ENCODE measurements at regions of chr7 and their contacts with region 1.

Region 1: DNA sequence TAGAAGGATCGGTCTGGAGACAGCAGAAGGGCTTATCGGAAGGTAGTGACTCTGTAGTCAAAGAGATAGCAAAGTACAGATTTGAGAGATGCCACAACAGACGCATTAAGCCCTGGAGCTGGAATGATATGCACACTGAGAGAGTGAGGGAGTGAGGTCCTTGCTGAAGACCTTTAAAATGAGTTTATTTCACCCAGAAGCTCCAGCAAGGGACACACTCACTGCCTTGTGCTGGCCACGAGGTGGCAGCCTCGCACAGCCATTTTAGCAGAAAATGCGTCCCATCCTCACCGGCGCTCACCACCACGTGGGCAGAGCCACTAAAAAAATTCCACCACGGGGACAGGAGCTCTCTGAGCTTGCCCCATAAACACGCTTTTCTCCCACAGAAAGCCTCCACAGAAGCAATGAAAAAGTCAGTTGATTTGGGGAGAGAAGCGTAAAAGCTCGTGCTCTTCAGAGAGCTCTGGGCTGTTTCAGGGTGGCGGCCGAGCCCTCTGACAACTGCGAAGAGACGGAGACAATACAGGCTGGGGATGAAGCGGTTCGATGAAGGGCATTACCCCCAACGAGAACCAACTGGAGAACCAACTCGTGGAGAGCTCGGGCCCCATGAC is 163.0 kb upstream of the KLF14 start:
- DNase-seq: peak in 1 of 2 donors; percentile 78
- H3K4me3 ChIP-seq: no peak overlapping the region
- H3K27ac ChIP-seq: peak overlapping the region; percentile 91 to 93
- H3K4me1 ChIP-seq: peaks cover 6 to 45% of the 10 kb centered on the region in 2 donors
- H3K27me3 ChIP-seq: no peaks in the 10 kb centered on the region
- CTCF ChIP-seq: peak; percentile 86

Region 2: DNA sequence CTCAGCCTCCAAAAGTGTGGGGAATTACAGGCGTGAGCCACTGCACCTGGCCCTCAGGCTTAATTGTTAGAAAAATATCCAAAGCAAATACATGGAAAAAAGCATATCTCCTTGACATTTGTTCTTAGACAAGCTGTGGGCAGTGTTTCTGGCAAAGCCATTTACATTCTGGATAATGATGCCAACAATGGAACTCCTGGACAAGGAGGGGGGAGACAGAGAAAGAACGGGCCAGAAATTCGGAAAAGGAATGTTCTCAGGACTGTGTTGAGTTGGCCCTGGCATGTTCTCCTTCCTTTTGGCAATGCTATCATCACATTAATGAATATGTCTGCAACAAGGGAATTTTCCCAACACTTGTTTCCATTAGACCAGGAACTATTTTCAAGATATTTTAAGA is 1033.0 kb before region 1 on chr7:
- intact Hi-C with region 1: loop called (anchors 10 kb)
- DNase-seq: peak in 1 of 2 donors; percentile 89
- H3K4me3 ChIP-seq: no peak overlapping the region
- H3K27ac ChIP-seq: peak overlapping the region; percentile 88 to 96
- H3K4me1 ChIP-seq: peaks cover 13 to 79% of the 10 kb centered on the region in 2 donors
- H3K27me3 ChIP-seq: no peaks in the 10 kb centered on the region
- CTCF ChIP-seq: no peak

Region 3: DNA sequence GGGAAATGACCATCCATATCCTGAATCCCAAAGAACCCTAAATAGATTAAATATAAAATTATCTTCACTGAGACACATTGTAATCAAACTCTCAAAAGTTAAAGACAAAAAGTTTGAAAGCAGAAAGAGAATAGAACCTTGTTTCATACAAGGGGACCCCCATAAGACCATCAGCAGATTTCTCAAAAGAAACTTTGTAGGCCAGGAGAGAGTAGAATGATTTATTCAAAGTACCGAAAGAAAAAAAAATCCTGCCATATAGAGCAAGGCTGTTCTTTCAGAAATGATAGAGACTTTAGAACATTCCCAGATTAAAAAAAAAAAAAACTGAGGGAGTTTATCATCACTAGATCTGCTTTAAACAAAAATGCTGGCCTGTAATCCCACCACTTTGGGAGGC is 128.2 kb before region 1 on chr7:
- intact Hi-C with region 1: no loop called
- DNase-seq: no peak
- H3K4me3 ChIP-seq: no peak overlapping the region
- H3K27ac ChIP-seq: no peak overlapping the region
- H3K4me1 ChIP-seq: no peaks in the 10 kb centered on the region
- H3K27me3 ChIP-seq: no peaks in the 10 kb centered on the region
- CTCF ChIP-seq: no peak

Region 4: GRCh38 chr7:130814778-130815335 is 82.1 kb before region 1 on chr7:
- intact Hi-C with region 1: no loop called
- DNase-seq: no peak
- H3K4me3 ChIP-seq: no peak overlapping the region
- H3K27ac ChIP-seq: no peak overlapping the region
- H3K4me1 ChIP-seq: no peaks in the 10 kb centered on the region
- H3K27me3 ChIP-seq: no peaks in the 10 kb centered on the region
- CTCF ChIP-seq: peak in 1 of 3 experiments; percentile 34

Region 5: DNA sequence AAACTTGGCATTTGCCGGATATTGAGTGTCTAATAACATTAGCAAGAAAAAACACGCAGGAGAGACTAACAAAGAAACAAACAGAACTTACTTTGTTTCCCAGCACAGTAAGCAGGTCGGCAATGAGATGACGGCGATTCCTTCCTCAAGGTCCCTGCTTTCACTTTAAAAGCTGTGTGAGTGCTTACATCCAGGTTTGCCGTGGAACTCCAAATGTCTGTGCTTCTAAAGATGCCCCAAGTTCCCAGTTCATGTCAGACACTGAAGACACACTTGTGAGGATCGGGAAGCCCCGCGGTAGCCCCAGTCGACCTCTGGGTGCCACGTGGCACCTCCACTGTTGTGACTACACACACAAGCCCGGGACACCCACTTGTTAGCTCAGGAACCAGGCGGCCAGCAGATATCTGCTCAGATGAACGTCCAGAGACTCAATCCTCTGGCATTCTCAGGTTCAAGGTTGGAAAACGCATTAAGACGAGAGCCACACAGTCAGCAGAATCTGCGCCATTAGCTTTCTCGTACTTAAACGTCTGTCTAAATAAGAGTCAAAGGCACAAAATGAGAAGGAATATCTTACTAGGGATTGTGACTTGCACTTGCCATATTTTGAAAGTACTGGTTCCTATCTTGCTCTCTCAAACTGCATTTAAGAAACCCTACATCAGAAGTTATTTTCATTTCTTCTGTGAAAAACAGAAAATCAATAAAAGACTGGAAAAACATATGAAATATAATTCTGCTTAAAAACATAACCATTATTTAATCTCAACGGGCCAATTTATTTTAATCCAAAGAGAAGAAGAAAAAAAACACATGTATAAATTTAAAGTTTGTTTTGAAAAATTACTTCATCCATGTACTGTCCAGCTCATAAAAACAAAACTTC is 44.6 kb after region 1 on chr7:
- intact Hi-C with region 1: loop called (anchors 5 kb)
- DNase-seq: peak in 1 of 2 donors; percentile 75
- H3K4me3 ChIP-seq: peak overlapping the region; percentile 44 to 60
- H3K27ac ChIP-seq: peak overlapping the region; percentile 69 to 70
- H3K4me1 ChIP-seq: peaks cover 0 to 34% of the 10 kb centered on the region in 2 donors
- H3K27me3 ChIP-seq: no peaks in the 10 kb centered on the region
- CTCF ChIP-seq: no peak

Region 6: GRCh38 chr7:131040467-131040932 is 143.5 kb after region 1 on chr7:
- intact Hi-C with region 1: loop called (anchors 2 kb)
- DNase-seq: no peak
- H3K4me3 ChIP-seq: no peak overlapping the region
- H3K27ac ChIP-seq: peak overlapping the region; percentile 31 to 50
- H3K4me1 ChIP-seq: peaks cover 4 to 20% of the 10 kb centered on the region in 2 donors
- H3K27me3 ChIP-seq: no peaks in the 10 kb centered on the region
- CTCF ChIP-seq: peak; percentile 80 to 87 (median 84)

Region 7: GRCh38 chr7:131327626-131328376 is 430.8 kb after region 1 on chr7 and contains the start of gene MKLN1:
- intact Hi-C with region 1: loop called (anchors 10 kb)
- DNase-seq: peak; percentile 68 to 95
- H3K4me3 ChIP-seq: peak within 1 kb of the TSS; percentile 72 to 93
- H3K27ac ChIP-seq: peak within 1 kb of the TSS; percentile 95 to 97
- H3K4me1 ChIP-seq: peaks cover 0 to 10% of the 10 kb centered on the region in 2 donors
- H3K27me3 ChIP-seq: no peaks in the 10 kb centered on the region
- CTCF ChIP-seq: no peak
- total RNA-seq, gene MKLN1: 18.0 TPM

Measured in ascending aorta (tissue), 2 donors.